ENCODE measurements at regions of chr5 and their contacts with region 1.

Region 1: GRCh38 chr5:142548739-142549275 is 137.1 kb downstream of the FGF1 start:
- ATAC-seq: peak; percentile 92 to 99 (median 95)
- H3K4me3 ChIP-seq: no peak overlapping the region
- H3K27ac ChIP-seq: no peak overlapping the region
- H3K4me1 ChIP-seq: peaks cover 15 to 22% of the 10 kb centered on the region in 2 donors

Region 2: DNA sequence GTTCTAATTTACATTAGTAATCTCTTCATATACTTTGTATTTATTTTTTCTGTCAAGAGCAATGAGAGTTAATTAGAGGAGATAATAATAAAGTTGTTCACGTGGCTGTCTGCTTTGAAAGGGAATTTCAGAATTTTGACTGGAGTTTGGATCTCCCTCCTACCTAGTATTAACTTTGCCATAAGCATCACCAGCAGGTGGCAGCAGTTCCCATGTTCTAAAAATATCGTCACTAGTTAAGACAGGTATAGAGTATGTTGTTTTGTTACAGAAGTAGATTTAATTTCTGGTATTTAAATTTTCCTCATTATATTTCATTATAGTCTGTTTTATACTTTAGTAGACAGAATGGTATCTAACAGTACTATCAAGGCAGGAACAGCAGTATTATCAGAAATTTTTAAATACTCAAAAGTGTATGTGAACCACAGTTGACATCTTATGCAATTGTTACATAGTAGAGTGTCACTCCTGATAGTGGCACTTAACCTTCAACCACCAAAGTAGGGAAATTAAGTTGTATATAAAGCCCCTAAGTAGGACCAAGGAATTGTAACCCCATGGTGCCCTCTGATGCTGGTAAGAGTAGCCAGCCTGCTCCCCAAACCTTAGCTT is 556.4 kb before region 1 on chr5:
- in situ Hi-C with region 1: loop called in 2 of 9 experiments (anchors 10 to 25 kb)
- ATAC-seq: peak; percentile 39 to 85 (median 66)
- H3K4me3 ChIP-seq: no peak overlapping the region
- H3K27ac ChIP-seq: no peak overlapping the region
- H3K4me1 ChIP-seq: no peaks in the 10 kb centered on the region

Region 3: DNA sequence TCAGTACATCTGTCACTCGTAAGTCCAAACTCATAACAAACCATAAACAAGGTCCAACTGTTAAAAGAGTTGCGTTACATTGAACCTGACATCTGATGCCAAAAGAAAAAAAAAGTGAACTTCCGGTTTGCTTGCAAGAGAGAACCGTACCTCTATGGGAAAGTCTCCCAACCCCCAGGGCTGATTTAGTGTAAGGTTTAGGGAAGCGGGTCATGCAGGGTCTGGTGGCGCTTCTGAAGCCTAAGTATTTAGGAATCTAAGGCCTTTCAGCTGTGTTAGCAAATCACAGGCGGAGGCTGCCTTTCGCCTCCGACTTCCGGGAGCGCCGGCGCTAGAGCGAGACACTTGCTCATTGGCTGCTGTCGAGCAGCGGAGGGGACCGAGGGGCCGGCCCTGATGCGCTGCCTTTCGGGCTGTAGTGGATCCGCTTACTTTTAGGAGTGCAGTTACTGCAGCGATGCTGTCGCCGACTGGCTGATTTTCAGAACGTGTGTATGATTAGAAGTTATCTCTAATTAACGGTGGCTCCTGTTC is 524.0 kb before region 1 on chr5:
- in situ Hi-C with region 1: loop called in 1 of 9 experiments (anchors 25 kb)
- ATAC-seq: peak; percentile 100
- H3K4me3 ChIP-seq: peak overlapping the region; percentile 34 to 42 (median 37)
- H3K27ac ChIP-seq: peak overlapping the region; percentile 76 to 91
- H3K4me1 ChIP-seq: peaks cover 0 to 4% of the 10 kb centered on the region in 2 donors

Region 4: GRCh38 chr5:142151436-142152383 is 397.1 kb before region 1 on chr5:
- in situ Hi-C with region 1: loop called in 6 of 9 experiments (anchors 10 to 25 kb)
- ATAC-seq: peak in 7 of 8 experiments; percentile 33 to 69 (median 56)
- H3K4me3 ChIP-seq: no peak overlapping the region
- H3K27ac ChIP-seq: no peak overlapping the region
- H3K4me1 ChIP-seq: peaks cover 0 to 6% of the 10 kb centered on the region in 2 donors

Region 5: DNA sequence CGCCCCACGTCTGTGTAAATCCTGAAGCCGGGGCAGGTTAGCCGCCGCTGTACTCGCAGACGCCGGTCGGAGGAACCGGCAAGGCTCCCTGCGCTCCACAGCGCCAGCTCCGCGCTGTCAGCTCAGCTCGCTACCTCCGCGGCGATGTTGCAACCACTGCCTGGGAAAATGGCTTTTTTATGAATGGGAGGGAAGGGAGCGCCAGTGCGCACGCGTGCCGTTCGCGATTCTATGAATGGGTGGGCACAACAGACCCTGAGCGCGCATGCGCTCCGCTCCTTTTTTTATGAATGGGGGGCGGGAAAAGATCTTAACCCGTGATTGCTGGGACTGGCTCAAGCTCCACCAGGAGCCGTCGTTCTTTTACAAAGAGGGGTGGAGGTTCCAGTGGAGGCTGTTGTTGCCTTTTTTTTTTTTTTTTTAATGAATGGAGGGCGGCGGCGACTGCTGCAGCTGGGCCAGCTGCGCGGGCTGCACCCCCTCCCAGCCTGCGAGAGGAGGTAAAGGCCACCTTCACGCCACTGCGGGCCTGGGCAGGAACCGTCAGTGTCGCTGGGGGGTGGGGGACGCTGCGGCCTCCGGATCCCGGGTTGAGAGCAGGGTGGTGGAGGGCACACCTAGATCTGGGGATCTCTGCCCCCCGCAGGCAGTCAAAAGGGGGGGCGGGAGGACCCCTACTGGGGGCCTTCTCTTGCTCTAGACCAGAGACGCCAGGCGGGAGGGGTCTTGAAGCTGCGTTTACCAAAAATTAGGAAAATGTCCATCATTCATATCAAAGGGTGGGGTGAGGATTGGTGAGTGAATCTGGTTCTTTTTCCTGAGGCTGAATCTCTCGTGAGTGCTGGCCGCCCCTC is 223.7 kb before region 1 on chr5 and contains the start of gene SPRY4:
- in situ Hi-C with region 1: loop called in 1 of 9 experiments (anchors 25 kb)
- ATAC-seq: peak; percentile 50 to 83 (median 76)
- H3K4me3 ChIP-seq: peak within 1 kb of the TSS; percentile 43 to 83 (median 56)
- H3K27ac ChIP-seq: peak within 1 kb of the TSS; percentile 47 to 91
- H3K4me1 ChIP-seq: peaks cover 32 to 44% of the 10 kb centered on the region in 2 donors
- total RNA-seq, gene SPRY4: 2.1 to 41.9 (median 6.9) TPM

Region 6: DNA sequence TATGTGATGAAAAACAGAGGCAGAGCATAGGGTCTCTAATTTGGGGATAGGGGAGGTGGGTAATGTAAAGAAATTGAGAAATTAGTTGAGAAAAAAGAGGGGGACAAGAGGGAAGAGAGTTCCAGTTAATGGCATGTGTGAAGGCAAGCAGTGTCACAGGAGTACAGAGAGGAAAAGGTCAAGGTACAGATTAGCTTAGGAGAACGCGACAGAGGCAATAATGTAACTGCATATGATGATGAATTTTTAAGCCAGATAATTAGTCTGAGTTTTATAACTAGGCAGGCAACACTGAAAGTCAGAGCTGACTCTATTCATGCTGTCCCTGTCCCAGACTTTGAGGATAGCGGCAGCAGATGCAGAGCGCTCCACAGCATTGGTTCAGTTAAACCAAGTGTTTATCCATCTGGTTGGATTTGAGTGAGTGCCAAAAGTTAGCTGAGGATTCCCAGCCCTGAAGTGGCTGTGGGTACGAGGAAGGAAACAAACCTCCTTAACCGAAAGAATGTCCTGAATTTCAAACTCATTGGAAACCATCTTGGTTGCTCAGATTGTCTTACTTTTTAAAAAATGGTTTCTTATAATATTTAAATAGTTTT is 536.6 kb after region 1 on chr5:
- in situ Hi-C with region 1: no loop called
- ATAC-seq: no peak
- H3K4me3 ChIP-seq: no peak overlapping the region
- H3K27ac ChIP-seq: no peak overlapping the region
- H3K4me1 ChIP-seq: no peaks in the 10 kb centered on the region

Measured in motor neuron (in vitro differentiated cells).